GM12878 (cell line): ENCODE measurements at regions of chr1 and their contacts with region 1.

Region 1: GRCh38 chr1:206935491-206936067 is 10.7 kb downstream of the PIGR start:
- DNase-seq: no peak
- ATAC-seq: peak; percentile 64
- H3K4me3 ChIP-seq: no peak overlapping the region
- H3K27ac ChIP-seq: no peak overlapping the region
- H3K4me1 ChIP-seq: peaks cover 27% of the 10 kb centered on the region
- H3K27me3 ChIP-seq: no peaks in the 10 kb centered on the region
- CTCF ChIP-seq: peak; percentile 44 to 71 (median 57)
- EP300 ChIP-seq: no peak
- POLR2A ChIP-seq: no peak
- RAD21 ChIP-seq: peak; percentile 36; the same call in 1 of the 2 replicates

Region 2: GRCh38 chr1:206725109-206725963 is 210.2 kb before region 1 on chr1:
- CTCF ChIA-PET with region 1: interaction called, 26 read pairs
- POLR2A ChIA-PET with region 1: interaction called, 3 read pairs
- RAD21 ChIA-PET with region 1: interaction called, 3 read pairs
- SMC1A ChIA-PET with region 1: interaction called, 4 read pairs
- in situ Hi-C with region 1: no loop called
- intact Hi-C with region 1: no loop called
- DNase-seq: no peak
- ATAC-seq: peak; percentile 84
- H3K4me3 ChIP-seq: no peak overlapping the region
- H3K27ac ChIP-seq: 0 out of 2 replicates have a peak overlapping the region, but pooled peaks have one; percentile 34
- H3K4me1 ChIP-seq: peaks cover 29% of the 10 kb centered on the region
- H3K27me3 ChIP-seq: no peaks in the 10 kb centered on the region
- CTCF ChIP-seq: peak; percentile 59 to 78 (median 73)
- EP300 ChIP-seq: no peak
- POLR2A ChIP-seq: no peak
- RAD21 ChIP-seq: peak; percentile 53

Region 3: GRCh38 chr1:206834711-206835110 is 100.9 kb before region 1 on chr1:
- CTCF ChIA-PET with region 1: interaction called, 14 read pairs
- POLR2A ChIA-PET with region 1: no interaction called
- RAD21 ChIA-PET with region 1: interaction called, 3 read pairs
- SMC1A ChIA-PET with region 1: interaction called, 6 read pairs
- in situ Hi-C with region 1: no loop called
- intact Hi-C with region 1: no loop called
- DNase-seq: no peak
- ATAC-seq: peak; percentile 41; the same call in 2 of the 3 replicates
- H3K4me3 ChIP-seq: no peak overlapping the region
- H3K27ac ChIP-seq: no peak overlapping the region
- H3K4me1 ChIP-seq: peaks cover 32% of the 10 kb centered on the region
- H3K27me3 ChIP-seq: no peaks in the 10 kb centered on the region; a peak in 1 of 4 replicates
- CTCF ChIP-seq: no peak
- EP300 ChIP-seq: no peak
- POLR2A ChIP-seq: no peak
- RAD21 ChIP-seq: no peak

Region 4: GRCh38 chr1:206895830-206896242 is 39.7 kb before region 1 on chr1:
- CTCF ChIA-PET with region 1: interaction called, 12 read pairs
- POLR2A ChIA-PET with region 1: no interaction called
- RAD21 ChIA-PET with region 1: no interaction called
- SMC1A ChIA-PET with region 1: interaction called, 4 read pairs
- in situ Hi-C with region 1: no loop called
- intact Hi-C with region 1: no loop called
- DNase-seq: no peak
- ATAC-seq: no peak
- H3K4me3 ChIP-seq: no peak overlapping the region
- H3K27ac ChIP-seq: no peak overlapping the region
- H3K4me1 ChIP-seq: no peaks in the 10 kb centered on the region
- H3K27me3 ChIP-seq: no peaks in the 10 kb centered on the region
- CTCF ChIP-seq: no peak
- EP300 ChIP-seq: no peak
- POLR2A ChIP-seq: no peak
- RAD21 ChIP-seq: no peak

Region 5: GRCh38 chr1:206949208-206949607 is 13.6 kb after region 1 on chr1:
- CTCF ChIA-PET with region 1: interaction called, 44 read pairs
- POLR2A ChIA-PET with region 1: interaction called, 13 read pairs
- RAD21 ChIA-PET with region 1: interaction called, 9 read pairs
- SMC1A ChIA-PET with region 1: interaction called, 15 read pairs
- in situ Hi-C with region 1: no loop called
- intact Hi-C with region 1: no loop called
- DNase-seq: no peak
- ATAC-seq: no peak
- H3K4me3 ChIP-seq: no peak overlapping the region
- H3K27ac ChIP-seq: no peak overlapping the region
- H3K4me1 ChIP-seq: peaks cover 40% of the 10 kb centered on the region
- H3K27me3 ChIP-seq: no peaks in the 10 kb centered on the region
- CTCF ChIP-seq: no peak
- EP300 ChIP-seq: no peak
- POLR2A ChIP-seq: no peak
- RAD21 ChIP-seq: no peak

Region 6: GRCh38 chr1:206967096-206967849 is 31.7 kb after region 1 on chr1:
- CTCF ChIA-PET with region 1: interaction called, 124 read pairs
- POLR2A ChIA-PET with region 1: interaction called, 4 read pairs
- RAD21 ChIA-PET with region 1: interaction called, 18 read pairs
- SMC1A ChIA-PET with region 1: interaction called, 43 read pairs
- in situ Hi-C with region 1: no loop called
- intact Hi-C with region 1: no loop called
- DNase-seq: peak; percentile 72
- ATAC-seq: peak; percentile 72
- H3K4me3 ChIP-seq: 0 out of 2 replicates have a peak overlapping the region, but pooled peaks have one; percentile 37
- H3K27ac ChIP-seq: peak overlapping the region; percentile 52
- H3K4me1 ChIP-seq: peaks cover 38% of the 10 kb centered on the region
- H3K27me3 ChIP-seq: no peaks in the 10 kb centered on the region
- CTCF ChIP-seq: no peak
- EP300 ChIP-seq: 0 out of 4 replicates have a peak, but pooled peaks of 1 of the 2 experiments have one; percentile 32
- POLR2A ChIP-seq: no peak
- RAD21 ChIP-seq: no peak